ENCODE measurements at regions of chr1 and their contacts with region 1.

Region 1: GRCh38 chr1:204263254-204263910 is 49.6 kb upstream of the GOLT1A start:
- DNase-seq: peak in 1 of 2 donors; percentile 45
- ATAC-seq: peak in 5 of 8 donors; percentile 25 to 62 (median 43)
- H3K4me3 ChIP-seq: no peak overlapping the region
- H3K27ac ChIP-seq: peak overlapping the region in 6 of 10 donors; percentile 13 to 47 (median 28)
- H3K4me1 ChIP-seq: peaks cover 20 to 46% (median 32%) of the 10 kb centered on the region in 9 donors
- H3K27me3 ChIP-seq: no peaks in the 10 kb centered on the region
- CTCF ChIP-seq: no peak

Region 2: GRCh38 chr1:204241050-204241449 is 22.3 kb before region 1 on chr1:
- intact Hi-C with region 1: no loop called
- DNase-seq: no peak
- ATAC-seq: no peak
- H3K4me3 ChIP-seq: no peak overlapping the region
- H3K27ac ChIP-seq: no peak overlapping the region
- H3K4me1 ChIP-seq: no peaks in the 10 kb centered on the region
- H3K27me3 ChIP-seq: no peaks in the 10 kb centered on the region
- CTCF ChIP-seq: no peak

Region 3: DNA sequence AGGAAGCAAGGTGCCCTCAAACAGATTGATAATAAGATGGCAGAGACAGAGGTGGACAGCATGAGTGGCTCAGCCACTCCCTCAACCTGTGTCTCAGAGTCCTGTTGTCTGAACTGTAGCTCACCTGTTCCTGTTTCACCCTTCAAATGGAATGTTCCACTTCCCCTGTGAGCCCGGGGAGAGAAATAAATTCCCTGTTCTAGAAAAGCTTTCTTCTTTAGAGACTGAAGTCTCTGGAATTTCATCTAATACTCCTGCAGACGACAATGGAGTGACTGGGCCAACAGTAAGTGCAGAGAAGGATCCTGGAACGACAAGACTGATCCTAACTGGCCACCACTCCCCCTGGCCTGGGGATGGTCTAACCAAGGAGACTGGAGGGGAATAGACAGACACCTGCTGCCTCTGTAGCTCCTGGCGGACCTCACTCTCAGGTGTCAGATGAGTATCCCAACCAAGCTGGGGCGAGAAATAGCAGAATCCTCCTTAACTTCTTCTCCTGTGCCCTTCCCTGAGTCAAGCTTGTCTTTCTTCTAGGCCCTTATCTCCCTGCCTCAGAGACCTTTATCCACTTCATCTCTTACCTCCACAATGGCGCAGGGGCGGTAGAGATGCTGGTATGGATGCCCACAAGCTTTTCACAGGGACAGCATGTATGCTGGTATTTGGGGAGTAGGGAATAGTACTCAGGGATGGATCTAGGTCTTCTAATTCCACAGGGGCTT is 51.0 kb after region 1 on chr1:
- intact Hi-C with region 1: loop called in 2 of 10 experiments (anchors 2 to 5 kb)
- DNase-seq: no peak
- ATAC-seq: no peak
- H3K4me3 ChIP-seq: no peak overlapping the region
- H3K27ac ChIP-seq: no peak overlapping the region
- H3K4me1 ChIP-seq: peaks cover 0 to 20% (median 8%) of the 10 kb centered on the region in 9 donors
- H3K27me3 ChIP-seq: no peaks in the 10 kb centered on the region
- CTCF ChIP-seq: no peak